ENCODE measurements at regions of chr20 and their contacts with region 1.

Region 1: DNA sequence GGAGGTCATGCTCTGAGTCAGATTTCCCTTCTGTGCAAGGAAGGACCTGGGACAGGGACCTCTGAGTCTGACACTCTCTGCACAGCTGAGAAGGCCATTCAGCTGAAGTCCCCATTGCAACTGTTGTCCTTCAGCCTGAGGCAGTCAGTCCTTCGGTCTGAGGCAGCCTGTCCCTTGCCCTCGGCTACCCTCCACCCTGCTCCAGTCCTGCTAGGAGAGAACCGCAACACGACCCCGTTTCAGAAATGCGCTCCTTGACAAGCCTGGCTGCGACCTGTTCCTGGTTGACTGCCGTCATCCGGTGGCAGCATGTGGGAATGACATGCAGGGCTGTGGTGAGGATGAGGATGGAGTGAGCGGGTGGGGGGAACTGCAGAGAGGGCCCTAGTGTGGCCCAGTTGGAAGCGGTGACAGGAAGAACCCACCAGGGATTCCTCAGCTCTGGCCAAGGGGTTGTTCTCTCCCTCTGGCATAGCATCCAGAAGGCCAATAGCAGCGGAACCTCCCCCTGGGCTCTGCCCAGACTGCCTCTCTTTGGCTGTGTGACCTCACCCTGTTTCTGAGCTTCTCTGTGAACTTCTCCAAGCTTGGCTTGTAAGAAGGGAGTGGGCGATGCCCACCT is 40.3 kb upstream of the ANGPT4 start:
- DNase-seq: peak; percentile 83

Region 2: GRCh38 chr20:815914-816606 is 140.4 kb before region 1 on chr20:
- CTCF ChIA-PET with region 1: interaction called, 31 read pairs
- POLR2A ChIA-PET with region 1: interaction called, 3 read pairs
- DNase-seq: peak; percentile 74

Measured in HEK293T (cell line).